Activated B cell treated with CpG ODN at 0.5 μM for 24 hours (primary cell): ENCODE measurements at regions of chr2 and their contacts with region 1.

Region 1: GRCh38 chr2:164697674-164698461 is 76.6 kb upstream of the GRB14 start:
- DNase-seq: no peak
- ATAC-seq: peak; percentile 50
- H3K4me3 Mint-ChIP-seq: no peak overlapping the region
- H3K27ac Mint-ChIP-seq: no peak overlapping the region
- H3K4me1 Mint-ChIP-seq: no peaks in the 10 kb centered on the region
- H3K27me3 Mint-ChIP-seq: no peaks in the 10 kb centered on the region
- CTCF ChIP-seq: no peak

Region 2: DNA sequence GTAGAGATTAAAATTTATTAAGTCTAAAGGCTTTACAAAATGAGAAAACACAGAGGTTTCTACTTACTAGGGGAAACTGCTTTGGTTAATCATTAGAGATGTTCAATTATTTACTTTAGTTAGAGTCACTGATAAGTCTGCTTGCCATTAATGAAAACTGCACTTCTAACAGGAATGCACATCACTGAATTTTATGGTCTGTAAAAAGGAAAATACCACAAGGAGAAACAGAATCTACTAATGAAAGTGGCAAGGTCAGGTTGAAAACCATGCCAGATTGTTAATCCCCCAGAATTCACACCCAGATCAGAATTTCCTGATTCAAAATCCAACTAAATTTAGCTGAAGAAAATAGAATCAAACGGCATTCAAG is 13.9 kb after region 1 on chr2:
- CTCF ChIA-PET with region 1: no interaction called
- POLR2A ChIA-PET with region 1: no interaction called
- intact Hi-C with region 1: loop called (anchors 2 kb)
- DNase-seq: no peak
- ATAC-seq: no peak
- H3K4me3 Mint-ChIP-seq: no peak overlapping the region
- H3K27ac Mint-ChIP-seq: no peak overlapping the region
- H3K4me1 Mint-ChIP-seq: no peaks in the 10 kb centered on the region
- H3K27me3 Mint-ChIP-seq: no peaks in the 10 kb centered on the region
- CTCF ChIP-seq: no peak

Region 3: GRCh38 chr2:164782323-164782722 is 84.5 kb after region 1 on chr2:
- CTCF ChIA-PET with region 1: no interaction called
- POLR2A ChIA-PET with region 1: no interaction called
- intact Hi-C with region 1: no loop called
- DNase-seq: no peak
- ATAC-seq: no peak
- H3K4me3 Mint-ChIP-seq: no peak overlapping the region
- H3K27ac Mint-ChIP-seq: no peak overlapping the region
- H3K4me1 Mint-ChIP-seq: peaks cover 36% of the 10 kb centered on the region
- H3K27me3 Mint-ChIP-seq: no peaks in the 10 kb centered on the region
- CTCF ChIP-seq: no peak